AG04449 (cell line): ENCODE measurements at regions of chr1 and their contacts with region 1.

Region 1: DNA sequence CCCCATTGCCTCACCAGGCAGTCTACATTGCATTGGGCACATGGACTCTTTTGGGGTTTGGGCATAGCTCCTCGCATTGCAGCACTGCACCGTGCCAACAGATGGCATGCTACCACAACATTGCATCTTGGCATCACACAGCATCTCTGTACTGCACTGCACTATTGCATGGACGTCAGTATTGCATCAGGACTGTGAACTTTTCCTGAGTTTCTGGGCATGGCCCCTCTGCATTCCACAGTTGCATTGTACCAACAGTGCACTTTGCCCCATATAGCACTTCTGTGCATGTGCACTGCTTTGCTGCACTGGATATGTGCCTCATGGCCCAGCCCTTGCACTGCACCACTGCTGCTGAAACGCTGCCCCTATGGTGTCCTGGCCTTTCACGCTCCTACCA is 9.6 kb downstream of the PTPRU start:
- DNase-seq: no peak
- H3K4me3 ChIP-seq: no peak overlapping the region
- CTCF ChIP-seq: peak; percentile 87

Region 2: DNA sequence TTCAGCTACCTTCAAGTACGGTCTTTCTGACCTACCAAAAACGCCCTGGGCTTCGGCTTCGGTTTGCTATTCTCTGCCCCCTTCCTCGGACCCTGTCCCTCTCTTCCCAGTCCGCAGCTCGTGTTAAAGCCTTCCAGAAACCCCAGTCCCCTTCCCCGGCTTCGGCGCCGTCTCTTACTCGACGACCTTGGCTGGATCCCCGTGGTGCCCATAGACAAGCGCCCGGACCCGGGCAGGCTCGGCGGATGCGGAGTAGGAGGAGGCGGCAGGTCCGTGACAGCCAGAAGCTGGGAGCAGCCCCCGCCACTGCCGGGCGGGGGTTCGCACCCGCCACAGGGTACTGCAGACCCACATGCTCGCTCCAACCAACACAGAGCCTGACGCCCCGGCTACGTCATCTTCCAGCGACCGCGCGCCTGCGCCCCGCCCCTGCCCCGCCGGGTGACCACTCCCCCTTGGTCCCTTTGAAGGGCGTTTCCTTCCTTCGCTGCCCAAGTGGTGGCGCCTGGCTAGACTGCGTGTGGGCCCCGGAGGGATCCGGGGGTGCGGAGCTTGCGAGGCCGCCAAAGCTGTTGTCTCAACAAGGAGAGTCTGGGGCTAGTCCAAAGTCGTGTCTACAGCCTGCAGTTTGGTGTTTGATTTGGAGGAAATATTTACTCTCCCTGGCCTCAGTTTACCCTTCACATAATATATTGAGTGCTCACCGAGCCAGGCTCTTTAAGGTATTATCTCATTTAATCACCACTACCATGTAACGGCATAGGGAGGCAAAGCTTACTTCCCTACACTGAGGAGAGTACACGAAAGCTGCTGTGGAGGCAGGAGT is 15.1 kb before region 1 on chr1 and contains the start of gene MECR:
- CTCF ChIA-PET with region 1: interaction called, 17 read pairs
- POLR2A ChIA-PET with region 1: interaction called, 3 read pairs
- DNase-seq: no peak
- H3K4me3 ChIP-seq: peak within 1 kb of the TSS; percentile 91
- CTCF ChIP-seq: peak; percentile 33

Region 3: GRCh38 chr1:29259802-29260441 is 14.0 kb after region 1 on chr1:
- CTCF ChIA-PET with region 1: interaction called, 17 read pairs
- POLR2A ChIA-PET with region 1: no interaction called
- DNase-seq: no peak
- H3K4me3 ChIP-seq: peak overlapping the region; percentile 55
- CTCF ChIP-seq: no peak

Region 4: DNA sequence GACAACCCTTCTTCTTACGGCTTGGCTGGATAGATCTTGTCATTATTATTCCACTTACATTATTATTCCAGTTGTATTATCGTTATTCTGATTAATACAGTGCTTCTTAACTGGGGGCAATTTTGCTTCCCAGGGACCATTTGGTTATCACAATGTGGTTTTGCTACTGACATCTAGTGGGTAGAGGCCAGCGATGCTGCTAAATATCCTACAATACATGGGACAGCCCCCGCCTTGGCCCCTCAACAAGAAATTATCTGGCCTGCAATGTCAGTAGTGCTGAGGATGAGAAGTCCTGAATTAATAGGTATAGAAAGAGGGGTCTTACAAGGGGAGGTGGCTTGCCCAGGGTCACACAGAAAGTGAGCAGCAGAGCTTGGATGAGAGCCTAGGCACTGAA is 96.1 kb after region 1 on chr1:
- CTCF ChIA-PET with region 1: interaction called, 26 read pairs
- POLR2A ChIA-PET with region 1: no interaction called
- DNase-seq: no peak
- H3K4me3 ChIP-seq: no peak overlapping the region
- CTCF ChIP-seq: peak; percentile 14

Region 5: DNA sequence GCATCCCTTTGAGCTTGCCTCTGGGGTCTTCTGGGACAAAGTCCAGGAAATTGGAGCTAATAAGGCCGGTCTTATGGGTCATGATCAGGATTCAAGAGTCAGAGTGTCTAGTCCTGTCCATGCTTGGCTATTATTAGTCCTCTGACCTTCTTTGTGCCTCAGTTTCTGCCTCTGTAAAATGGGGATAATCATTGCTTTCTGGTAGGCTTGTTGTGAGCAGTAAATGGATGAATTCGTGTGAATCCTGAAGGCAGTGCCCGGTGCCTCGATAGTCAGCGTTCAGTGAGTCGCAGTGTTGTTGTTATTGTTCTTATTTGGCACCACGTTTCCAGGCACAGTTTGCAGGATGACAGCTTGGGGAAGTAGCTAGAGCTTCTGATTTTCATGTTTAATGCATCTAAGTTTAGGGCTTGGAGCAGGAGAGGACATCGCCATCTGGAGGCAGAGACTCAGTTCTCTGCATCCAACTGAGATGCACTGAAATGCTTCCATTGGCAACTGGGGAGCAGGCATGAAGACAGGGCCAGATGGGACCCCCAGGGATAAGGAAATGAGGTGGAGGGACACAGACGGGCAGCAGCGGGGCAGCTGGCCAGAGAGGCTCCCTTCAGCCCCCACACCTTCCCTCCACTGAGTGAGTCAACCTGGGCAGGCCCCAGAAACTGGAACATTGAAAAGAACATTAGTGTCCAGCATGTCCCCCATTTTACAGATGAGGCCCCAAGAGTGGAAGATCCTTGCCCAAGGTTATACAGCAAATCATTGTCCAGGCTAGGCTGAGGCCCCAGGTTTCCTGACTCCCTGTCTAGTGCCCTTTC is 150.8 kb after region 1 on chr1:
- CTCF ChIA-PET with region 1: interaction called, 20 read pairs
- POLR2A ChIA-PET with region 1: no interaction called
- DNase-seq: no peak
- H3K4me3 ChIP-seq: no peak overlapping the region
- CTCF ChIP-seq: peak; percentile 31

Region 6: DNA sequence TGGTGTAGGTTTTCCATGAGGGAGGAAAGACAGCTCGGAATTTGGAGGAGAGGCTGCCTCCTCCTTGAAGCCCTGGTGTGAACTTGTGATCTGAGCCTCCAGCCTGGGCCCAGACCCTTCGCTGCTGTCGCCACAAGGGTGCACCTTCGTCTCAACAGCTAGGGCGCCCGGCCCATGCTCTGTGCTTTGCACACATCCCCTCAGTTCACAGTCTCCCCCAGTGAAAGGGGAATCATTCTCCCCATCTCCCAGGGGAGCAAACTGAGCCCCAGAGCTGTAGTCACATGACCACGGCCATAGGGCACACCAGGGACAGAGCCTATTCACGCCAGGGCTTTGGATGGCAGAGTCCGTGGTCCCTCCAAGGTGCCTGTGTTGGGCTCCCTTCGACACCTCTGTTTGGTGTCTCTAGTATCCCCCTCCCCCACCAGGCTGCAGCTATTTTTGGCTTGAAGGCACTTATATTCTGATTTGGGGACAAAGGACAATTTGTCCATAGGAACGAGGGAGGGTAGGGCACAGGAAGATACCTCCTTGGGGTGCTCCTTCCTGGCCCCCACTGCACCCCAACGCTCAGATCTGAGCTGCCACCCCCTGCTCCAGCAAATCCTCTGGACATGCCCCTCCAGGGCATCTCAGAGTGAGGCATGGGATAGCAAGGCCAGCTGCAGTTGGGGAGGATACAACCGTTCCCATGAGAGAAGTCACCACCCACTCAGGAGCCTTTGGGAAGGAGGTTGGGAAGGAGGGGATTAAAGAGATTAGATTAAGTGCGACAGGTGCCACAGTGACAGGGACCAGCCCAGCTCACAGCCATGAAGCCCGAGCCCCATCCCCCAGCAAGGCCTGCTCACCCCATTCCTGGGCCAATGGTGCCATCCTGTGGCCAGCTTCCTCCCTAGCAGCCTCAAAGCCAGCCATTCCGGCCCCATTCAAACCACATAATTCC is 1461.8 kb after region 1 on chr1:
- CTCF ChIA-PET with region 1: interaction called, 17 read pairs
- POLR2A ChIA-PET with region 1: no interaction called
- DNase-seq: no peak
- H3K4me3 ChIP-seq: no peak overlapping the region
- CTCF ChIP-seq: peak; percentile 89